Thyroid gland (tissue), 4 donors: ENCODE measurements at regions of chr4 and their contacts with region 1.

Region 1: DNA sequence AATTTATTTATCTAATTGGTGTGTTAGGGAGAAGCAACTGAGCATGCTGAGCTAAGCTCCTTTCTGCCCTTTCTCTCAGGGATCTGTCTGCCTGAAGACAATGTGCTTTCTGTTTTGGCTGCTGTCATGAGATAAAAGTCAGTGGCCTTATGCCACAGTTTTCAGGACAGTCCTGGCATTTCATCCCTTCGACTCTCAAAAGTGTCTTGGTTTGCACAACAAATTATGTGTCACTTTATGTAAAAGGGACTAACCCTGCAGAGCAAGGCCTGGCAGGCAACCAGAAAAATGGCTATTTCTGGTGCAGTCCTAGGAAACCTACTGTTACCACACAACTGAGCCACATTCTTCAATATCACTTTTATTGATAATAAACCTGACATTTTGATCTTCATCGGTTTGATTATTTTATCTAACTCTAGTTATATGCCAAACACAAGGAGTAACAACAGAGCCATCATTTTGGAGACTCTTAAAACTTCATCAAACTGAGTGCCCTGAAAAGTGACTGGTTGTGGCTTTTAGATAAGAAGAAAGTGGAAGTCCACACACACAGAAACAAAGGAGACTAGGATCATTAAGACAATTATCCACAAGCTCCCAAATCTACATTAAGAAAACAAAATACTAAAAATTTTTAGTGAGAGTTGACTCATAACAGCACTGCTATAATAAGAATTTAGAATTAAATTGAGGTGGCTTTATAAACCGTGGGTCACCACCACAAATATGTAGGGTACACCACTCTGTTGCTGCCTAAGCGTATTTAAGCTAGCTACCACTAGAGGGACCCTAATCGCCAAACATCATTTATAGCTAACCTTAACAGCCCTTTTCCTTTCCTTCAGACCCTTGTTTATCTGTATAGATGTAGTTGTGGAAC is 95.9 kb upstream of the PTPN13 start:
- DNase-seq: peak in 1 of 2 donors; percentile 6
- H3K4me3 ChIP-seq: no peak overlapping the region
- H3K27ac ChIP-seq: no peak overlapping the region
- H3K4me1 ChIP-seq: peaks cover 0 to 12% of the 10 kb centered on the region in 2 donors
- H3K27me3 ChIP-seq: no peaks in the 10 kb centered on the region
- CTCF ChIP-seq: peak; percentile 46 to 81 (median 74)
- POLR2A ChIP-seq: no peak

Region 2: DNA sequence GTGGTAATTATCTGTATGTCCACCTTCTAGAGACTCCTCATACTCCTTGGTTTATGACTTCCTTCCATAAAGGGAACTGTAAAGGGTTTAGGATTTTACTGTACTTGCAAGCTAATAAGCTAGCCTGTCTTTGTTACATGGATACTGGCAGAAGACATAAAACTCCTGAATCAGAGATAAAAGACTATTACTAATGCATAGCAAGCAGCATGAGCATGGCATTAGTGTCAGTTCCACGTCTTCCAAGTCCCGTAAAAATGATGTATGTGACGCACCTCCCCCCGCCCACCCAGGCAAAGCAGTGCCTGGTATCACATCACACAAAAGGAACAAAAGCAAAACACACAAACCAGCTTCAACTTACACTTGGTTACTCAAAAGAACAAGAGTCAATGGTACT is 280.0 kb after region 1 on chr4:
- intact Hi-C with region 1: loop called (anchors 10 kb)
- DNase-seq: no peak
- H3K4me3 ChIP-seq: no peak overlapping the region
- H3K27ac ChIP-seq: no peak overlapping the region
- H3K4me1 ChIP-seq: no peaks in the 10 kb centered on the region
- H3K27me3 ChIP-seq: no peaks in the 10 kb centered on the region
- CTCF ChIP-seq: no peak
- POLR2A ChIP-seq: no peak

Region 3: GRCh38 chr4:86895692-86896488 is 397.7 kb after region 1 on chr4:
- intact Hi-C with region 1: loop called (anchors 5 kb)
- DNase-seq: no peak
- H3K4me3 ChIP-seq: no peak overlapping the region
- H3K27ac ChIP-seq: no peak overlapping the region
- H3K4me1 ChIP-seq: no peaks in the 10 kb centered on the region
- H3K27me3 ChIP-seq: no peaks in the 10 kb centered on the region
- CTCF ChIP-seq: peak; percentile 41 to 87 (median 72)
- POLR2A ChIP-seq: no peak